Thyroid gland (tissue), 4 donors: ENCODE measurements at regions of chr12 and their contacts with region 1.

Region 1: GRCh38 chr12:68224613-68225290 is 858 bp downstream of the IL26 start:
- DNase-seq: no peak
- H3K4me3 ChIP-seq: no peak overlapping the region
- H3K27ac ChIP-seq: no peak overlapping the region
- H3K4me1 ChIP-seq: no peaks in the 10 kb centered on the region
- H3K27me3 ChIP-seq: no peaks in the 10 kb centered on the region
- CTCF ChIP-seq: no peak
- POLR2A ChIP-seq: no peak

Region 2: GRCh38 chr12:68200854-68201253 is 23.9 kb before region 1 on chr12:
- intact Hi-C with region 1: no loop called
- DNase-seq: no peak
- H3K4me3 ChIP-seq: no peak overlapping the region
- H3K27ac ChIP-seq: no peak overlapping the region
- H3K4me1 ChIP-seq: no peaks in the 10 kb centered on the region
- H3K27me3 ChIP-seq: no peaks in the 10 kb centered on the region
- CTCF ChIP-seq: no peak
- POLR2A ChIP-seq: no peak

Region 3: DNA sequence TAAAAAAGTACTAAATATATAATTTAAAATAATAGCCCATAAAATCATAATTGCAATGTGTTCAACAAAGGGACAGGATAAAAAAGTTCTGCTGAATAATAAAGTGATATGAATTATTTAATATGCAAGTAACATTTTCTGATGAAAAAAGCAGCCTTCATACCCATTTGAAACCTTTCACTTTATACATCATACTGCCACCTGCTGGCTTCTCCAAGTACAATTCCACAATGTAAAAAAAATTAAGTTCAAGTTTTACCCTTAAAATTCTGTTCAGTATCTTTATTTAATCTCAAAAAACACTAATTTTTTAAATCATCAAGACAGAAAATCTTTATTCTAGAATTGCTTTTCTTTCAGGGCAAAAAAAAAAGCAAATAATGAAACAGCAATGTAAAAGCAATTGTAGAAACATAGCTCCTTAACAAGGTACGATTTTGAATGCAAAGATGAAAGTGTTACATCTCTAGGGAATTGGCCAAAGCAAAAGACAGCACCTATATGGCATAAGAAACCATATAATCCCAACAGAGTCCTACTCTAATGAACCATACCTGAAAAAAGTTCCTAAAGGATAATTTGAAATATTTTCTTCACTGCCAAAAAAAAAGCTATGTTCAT is 92.4 kb after region 1 on chr12:
- intact Hi-C with region 1: loop called (anchors 2 kb)
- DNase-seq: peak; percentile 24 to 32
- H3K4me3 ChIP-seq: no peak overlapping the region
- H3K27ac ChIP-seq: no peak overlapping the region
- H3K4me1 ChIP-seq: no peaks in the 10 kb centered on the region
- H3K27me3 ChIP-seq: no peaks in the 10 kb centered on the region
- CTCF ChIP-seq: peak; percentile 19 to 73 (median 50)
- POLR2A ChIP-seq: no peak

Region 4: DNA sequence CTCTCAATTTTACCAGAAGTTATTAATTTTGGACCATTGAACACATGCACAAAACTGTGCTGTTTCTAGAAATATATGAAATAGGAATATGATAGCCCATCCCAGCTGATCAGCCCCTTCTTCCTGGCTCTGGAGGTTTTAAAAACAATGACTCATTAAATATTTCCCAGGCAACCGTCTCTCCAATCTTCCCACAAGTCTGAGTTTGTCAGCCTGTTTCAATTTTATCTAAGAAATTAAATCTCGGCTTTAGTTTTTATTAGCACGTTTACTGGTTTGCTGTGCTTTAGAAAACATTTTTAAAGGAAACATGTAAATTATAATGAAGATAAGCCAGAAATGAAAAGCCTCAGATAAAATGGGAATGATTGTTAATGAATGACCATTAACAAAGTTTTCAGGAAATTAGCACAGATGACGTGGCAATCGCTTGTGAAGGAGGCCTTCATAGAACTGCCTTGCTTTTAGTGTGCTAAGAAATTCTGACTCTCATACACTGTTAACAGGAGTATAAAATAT is 296.6 kb after region 1 on chr12:
- intact Hi-C with region 1: no loop called
- DNase-seq: no peak
- H3K4me3 ChIP-seq: no peak overlapping the region
- H3K27ac ChIP-seq: peak overlapping the region in 1 of 3 donors; percentile 20
- H3K4me1 ChIP-seq: no peaks in the 10 kb centered on the region
- H3K27me3 ChIP-seq: no peaks in the 10 kb centered on the region
- CTCF ChIP-seq: no peak
- POLR2A ChIP-seq: no peak